Activated T-helper 1 cell treated with anti-CD3 and anti-CD28 coated beads, Interleukin-12 subunit alpha, Interleukin-12 subunit beta, Interleukin-2, Interleukin-4 antibody, amounts not matched to agents 30 ng/mL and 10 ng/mL and 1 ng/mL, durations not matched to agents 14 hours and 24 hours and 36 hours (primary cell): ENCODE measurements at regions of chrX and their contacts with region 1.

Region 1: DNA sequence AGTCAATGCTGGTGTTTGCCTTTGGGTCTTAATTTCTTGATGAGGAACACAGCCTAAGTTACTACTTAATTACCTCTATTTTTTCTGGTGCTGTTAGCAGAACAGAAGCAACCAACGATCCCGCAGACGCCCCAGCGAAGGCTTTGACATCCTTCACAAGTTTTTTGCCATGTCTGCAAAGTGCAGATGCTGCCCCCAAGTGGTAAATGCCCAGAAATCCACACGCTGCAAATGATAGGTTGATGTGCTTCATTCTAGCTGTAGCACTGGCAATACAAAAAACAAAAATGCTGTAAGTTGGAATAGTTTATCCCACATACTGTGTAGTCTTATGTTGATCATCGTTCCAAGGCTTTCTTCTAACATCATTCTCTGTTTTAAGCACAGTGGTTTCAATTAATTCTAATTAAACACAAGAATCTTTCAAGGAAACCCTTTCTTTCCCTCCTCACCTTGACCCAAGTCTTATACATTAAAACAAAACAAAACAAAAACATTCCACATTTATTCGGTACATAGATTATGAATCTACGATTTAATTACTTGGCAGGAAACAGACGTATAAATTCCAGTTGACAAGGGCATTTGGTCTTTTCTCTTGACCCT is 1.2 kb downstream of the PNPLA4 start:
- DNase-seq: peak; percentile 35
- H3K4me3 Mint-ChIP-seq: peak overlapping the region; percentile 54
- H3K27ac Mint-ChIP-seq: no peak overlapping the region
- H3K4me1 Mint-ChIP-seq: peaks cover 13% of the 10 kb centered on the region
- H3K27me3 Mint-ChIP-seq: peaks cover 2% of the 10 kb centered on the region

Region 2: DNA sequence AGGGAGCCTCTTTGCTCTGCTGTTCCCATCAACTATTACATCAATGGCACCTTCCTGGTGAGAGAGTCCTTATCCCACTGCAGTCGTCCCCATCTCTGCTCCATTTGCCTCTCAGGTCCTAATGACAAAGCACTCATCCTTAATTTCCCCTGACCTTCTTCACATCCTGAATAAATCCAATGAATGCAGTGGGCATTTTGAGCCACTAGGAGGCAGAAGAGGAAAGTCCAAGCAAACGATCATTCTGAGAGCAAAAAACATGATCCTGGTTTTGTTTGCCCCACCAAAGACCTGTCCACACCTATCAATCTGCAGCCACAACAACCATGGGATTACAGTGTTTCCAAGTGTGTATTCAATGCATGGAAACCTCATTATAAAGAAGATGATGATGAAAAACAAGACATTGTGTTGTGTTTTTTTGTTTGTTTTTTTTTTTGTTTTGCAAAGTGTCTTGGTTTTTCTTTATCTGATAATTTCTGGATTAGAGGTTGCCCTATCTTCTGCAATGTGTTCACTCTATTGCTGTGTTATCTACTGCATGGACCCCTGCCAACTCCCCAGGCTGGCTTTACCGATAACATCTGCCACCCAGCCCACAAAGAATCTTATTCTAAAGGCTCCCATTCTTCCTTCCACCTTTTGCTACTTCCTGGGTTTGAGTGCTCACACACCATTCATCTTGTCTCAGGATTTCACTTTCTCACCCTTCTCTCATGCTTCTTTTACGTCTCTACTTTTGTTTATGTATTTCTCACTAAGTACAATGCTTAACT is 1904.5 kb before region 1 on chrX:
- intact Hi-C with region 1: loop called (anchors 2 kb)
- DNase-seq: no peak
- H3K4me3 Mint-ChIP-seq: no peak overlapping the region
- H3K27ac Mint-ChIP-seq: no peak overlapping the region
- H3K4me1 Mint-ChIP-seq: no peaks in the 10 kb centered on the region
- H3K27me3 Mint-ChIP-seq: no peaks in the 10 kb centered on the region

Region 3: DNA sequence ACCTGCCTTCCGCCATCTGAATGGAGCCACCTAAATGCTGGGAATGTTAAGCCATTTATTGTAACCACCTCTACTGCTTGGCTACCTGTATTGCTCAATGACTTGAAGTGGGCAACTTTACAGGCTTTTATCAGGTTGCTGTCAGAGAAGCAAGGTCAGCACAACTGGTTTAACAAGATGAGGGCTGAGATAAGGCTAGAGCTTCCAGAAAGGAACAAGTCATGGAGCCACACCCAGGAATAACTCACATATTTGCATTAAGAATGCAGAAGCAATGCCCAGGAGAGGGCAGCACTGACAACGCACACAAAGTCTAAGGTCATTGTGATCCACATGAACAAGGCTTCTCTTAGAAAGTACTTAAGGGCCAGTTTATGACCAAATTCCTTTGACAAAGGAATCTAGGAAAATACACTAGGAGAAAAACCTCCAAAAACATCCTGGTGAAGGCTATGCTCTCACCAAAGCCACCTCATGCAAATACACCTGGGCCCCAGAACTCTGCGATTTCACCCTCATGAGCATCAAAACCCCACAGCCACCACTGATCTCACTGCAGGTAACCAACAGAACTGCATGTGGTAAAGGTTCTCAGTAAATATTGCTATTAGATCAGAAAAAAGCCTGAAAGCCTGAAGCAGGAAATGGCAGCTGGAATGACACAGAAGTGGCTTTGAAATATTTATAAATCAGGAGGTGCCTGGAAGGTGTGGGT is 793.5 kb before region 1 on chrX:
- intact Hi-C with region 1: loop called (anchors 5 kb)
- DNase-seq: no peak
- H3K4me3 Mint-ChIP-seq: no peak overlapping the region
- H3K27ac Mint-ChIP-seq: no peak overlapping the region
- H3K4me1 Mint-ChIP-seq: peaks cover 16% of the 10 kb centered on the region
- H3K27me3 Mint-ChIP-seq: no peaks in the 10 kb centered on the region

Region 4: DNA sequence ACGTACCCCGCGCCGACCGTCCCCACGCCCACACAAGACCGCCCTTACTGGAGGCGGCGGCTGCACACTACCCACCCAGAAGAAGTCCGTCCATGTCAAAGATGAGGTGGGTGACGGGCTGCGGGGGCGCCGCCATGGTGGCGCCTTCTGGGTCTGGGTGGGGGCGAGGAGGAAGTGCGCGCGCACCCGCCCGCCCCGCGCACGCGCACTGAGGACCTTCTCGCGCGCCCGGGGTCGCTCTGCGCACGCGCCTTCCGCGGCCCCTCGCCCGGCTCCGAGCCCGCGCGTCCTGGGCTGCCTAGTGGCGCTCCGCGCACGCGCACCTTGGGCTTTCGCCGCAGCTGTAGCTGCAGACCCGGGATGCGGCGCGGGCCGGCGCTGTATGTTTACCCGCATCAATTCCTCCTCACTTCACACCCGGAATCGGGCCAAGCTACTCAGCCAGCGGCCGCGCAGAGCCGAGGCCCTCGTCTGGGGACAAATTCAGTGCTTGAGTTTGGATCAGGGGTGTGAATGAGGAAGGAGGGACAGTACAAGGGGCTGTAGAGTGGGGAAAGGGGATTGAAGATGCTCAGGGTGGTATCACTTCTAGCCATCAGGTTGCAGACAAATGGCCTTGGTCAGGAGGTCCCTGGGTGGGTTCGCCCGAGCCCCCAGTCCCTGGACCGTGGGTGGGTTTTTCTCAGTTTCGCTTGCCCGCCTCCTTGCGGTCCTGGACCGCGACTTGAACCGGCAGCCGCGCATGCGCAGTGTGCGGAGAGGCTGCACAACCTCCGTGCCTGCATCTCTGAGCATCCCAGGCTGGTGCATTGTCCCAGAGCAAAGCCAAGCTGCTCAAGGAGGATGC is 777.8 kb before region 1 on chrX and contains the start of gene PUDP:
- intact Hi-C with region 1: loop called (anchors 1 kb)
- DNase-seq: peak; percentile 80
- H3K4me3 Mint-ChIP-seq: peak within 1 kb of the TSS; percentile 86
- H3K27ac Mint-ChIP-seq: peak within 1 kb of the TSS; percentile 82
- H3K4me1 Mint-ChIP-seq: no peaks in the 10 kb centered on the region
- H3K27me3 Mint-ChIP-seq: no peaks in the 10 kb centered on the region
- total RNA-seq, gene PUDP: 20.1 and 23.4 TPM in 2 replicates

Region 5: DNA sequence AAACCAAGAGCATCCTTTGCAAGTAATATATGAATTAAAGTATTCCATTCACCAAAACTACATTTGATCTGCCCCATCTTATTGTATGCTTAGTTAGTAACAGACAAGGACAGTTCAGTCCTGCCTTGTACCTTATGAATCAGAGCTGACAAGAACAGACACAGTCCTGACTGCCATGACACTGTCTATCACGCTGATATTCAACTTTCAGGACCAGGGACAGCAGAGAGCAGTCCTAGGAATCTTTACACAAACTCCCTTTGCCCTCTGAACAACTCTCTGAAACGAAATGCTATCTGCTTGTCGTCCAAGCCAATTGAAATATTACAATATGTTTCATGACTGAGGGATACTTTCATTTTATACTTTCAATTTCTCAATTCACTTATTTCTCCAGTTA is 351.6 kb before region 1 on chrX:
- intact Hi-C with region 1: no loop called
- DNase-seq: no peak
- H3K4me3 Mint-ChIP-seq: no peak overlapping the region
- H3K27ac Mint-ChIP-seq: no peak overlapping the region
- H3K4me1 Mint-ChIP-seq: no peaks in the 10 kb centered on the region
- H3K27me3 Mint-ChIP-seq: no peaks in the 10 kb centered on the region

Region 6: GRCh38 chrX:7941390-7942042 is 15.5 kb after region 1 on chrX:
- intact Hi-C with region 1: no loop called
- DNase-seq: no peak
- H3K4me3 Mint-ChIP-seq: no peak overlapping the region
- H3K27ac Mint-ChIP-seq: no peak overlapping the region
- H3K4me1 Mint-ChIP-seq: no peaks in the 10 kb centered on the region
- H3K27me3 Mint-ChIP-seq: peaks cover 2% of the 10 kb centered on the region